CD8-positive, alpha-beta T cell (primary cell): ENCODE measurements at regions of chr13 and their contacts with region 1.

Region 1: DNA sequence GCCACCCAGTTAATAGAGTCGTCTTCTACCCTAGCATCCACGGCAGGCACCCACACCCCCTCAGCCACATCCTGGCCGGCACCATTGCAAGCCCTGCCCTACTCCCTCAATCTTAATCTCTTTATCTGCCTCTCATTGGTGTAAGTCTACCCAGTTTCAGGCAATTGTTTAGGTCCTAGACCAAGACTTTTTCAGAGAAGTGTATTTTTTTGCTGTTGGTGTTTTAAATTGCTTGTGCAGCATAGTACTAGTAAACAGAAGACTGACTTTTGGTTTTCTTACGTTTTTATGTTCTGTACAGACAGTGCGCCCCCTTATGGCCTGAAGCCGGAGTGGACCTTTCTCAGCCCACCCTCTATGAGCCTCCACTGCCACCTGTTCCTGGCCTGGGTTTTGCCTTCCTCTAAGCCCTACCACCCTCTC is 2.3 kb upstream of the LCP1 start:
- DNase-seq: peak; percentile 57 to 89 (median 77)
- ATAC-seq: peak; percentile 57
- H3K4me3 ChIP-seq: peak overlapping the region; percentile 31 to 32
- H3K4me3 Mint-ChIP-seq: peak overlapping the region; percentile 96
- H3K27ac ChIP-seq: peak overlapping the region; percentile 23 to 94
- H3K27ac Mint-ChIP-seq: peak overlapping the region; percentile 95
- H3K4me1 ChIP-seq: peaks cover 30% of the 10 kb centered on the region
- H3K4me1 Mint-ChIP-seq: peaks cover 37% of the 10 kb centered on the region
- H3K27me3 ChIP-seq: no peaks in the 10 kb centered on the region
- H3K27me3 Mint-ChIP-seq: no peaks in the 10 kb centered on the region
- CTCF ChIP-seq: peak; percentile 74

Region 2: DNA sequence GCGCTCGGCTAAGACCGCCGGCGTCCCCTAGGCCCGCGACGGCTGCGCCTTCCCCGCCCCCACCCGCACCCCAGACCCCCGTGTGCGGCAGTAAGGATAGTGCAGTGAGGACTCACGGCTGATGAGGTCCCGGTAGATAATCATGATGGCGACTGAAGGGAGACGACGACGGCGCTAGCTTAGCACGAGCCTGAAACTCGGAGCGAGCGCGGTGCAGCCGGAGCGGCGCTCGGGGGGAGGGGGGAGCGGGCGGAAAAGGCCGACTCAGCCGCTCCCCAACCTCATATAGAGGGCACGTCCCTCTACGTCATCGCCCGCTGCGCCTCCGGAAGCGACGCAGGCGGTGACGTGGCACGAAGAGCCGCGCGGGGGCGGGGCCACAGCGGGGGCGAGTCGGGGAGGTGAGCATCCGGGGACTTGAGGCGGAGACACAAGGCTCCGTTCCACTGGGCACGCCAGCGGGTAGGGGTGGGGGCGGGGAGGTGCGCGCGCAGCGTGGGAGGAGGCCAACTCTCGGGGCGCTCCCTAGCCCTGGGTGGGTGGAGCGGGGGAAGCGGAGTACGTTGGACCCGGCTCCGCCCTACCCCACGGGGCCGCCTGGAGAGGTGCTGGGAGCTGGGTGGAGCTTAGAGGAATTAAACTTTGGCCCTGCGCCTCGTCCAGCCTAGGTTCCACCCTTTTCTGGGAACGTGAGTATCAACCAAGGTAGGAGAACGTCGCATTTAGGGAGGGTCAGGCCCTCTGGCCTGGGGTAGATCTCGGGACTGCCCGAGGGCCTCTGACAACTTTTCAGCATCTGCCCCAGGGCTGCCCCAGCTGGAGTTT is 843.1 kb before region 1 on chr13 and contains the start of gene TPT1:
- CTCF ChIA-PET with region 1: no interaction called
- POLR2A ChIA-PET with region 1: no interaction called
- intact Hi-C with region 1: loop called in 1 of 2 experiments (anchors 2 kb)
- DNase-seq: peak; percentile 99 to 100 (median 100)
- ATAC-seq: peak; percentile 86
- H3K4me3 ChIP-seq: peak within 1 kb of the TSS; percentile 83 to 89
- H3K4me3 Mint-ChIP-seq: peak within 1 kb of the TSS; percentile 99
- H3K27ac ChIP-seq: peak within 1 kb of the TSS; percentile 96 to 99
- H3K27ac Mint-ChIP-seq: peak within 1 kb of the TSS; percentile 99
- H3K4me1 ChIP-seq: peaks cover 42% of the 10 kb centered on the region
- H3K4me1 Mint-ChIP-seq: peaks cover 63% of the 10 kb centered on the region
- H3K27me3 ChIP-seq: no peaks in the 10 kb centered on the region
- H3K27me3 Mint-ChIP-seq: no peaks in the 10 kb centered on the region
- CTCF ChIP-seq: no peak
- total RNA-seq, gene TPT1: 8,260 to 8,503 TPM

Region 3: DNA sequence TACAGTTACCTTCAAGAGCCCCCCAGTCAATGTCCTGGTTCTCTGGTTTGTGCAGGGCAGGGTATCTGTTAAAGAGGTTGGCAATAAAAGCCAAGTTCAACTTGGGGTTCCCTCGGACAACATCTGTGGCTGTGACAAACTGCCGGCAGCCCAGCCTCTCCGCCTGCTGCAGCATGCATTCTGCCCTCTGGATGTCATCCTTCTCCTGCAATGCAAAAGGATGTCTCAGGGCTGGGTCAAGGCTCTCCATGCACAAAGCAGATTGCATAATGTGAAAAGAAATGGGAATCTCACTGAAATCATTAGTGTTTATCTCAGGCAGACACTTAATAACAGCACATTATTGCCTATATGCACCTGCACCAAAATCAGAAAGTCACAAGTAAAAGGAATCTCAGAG is 37.4 kb before region 1 on chr13:
- CTCF ChIA-PET with region 1: interaction called, 4 read pairs
- POLR2A ChIA-PET with region 1: no interaction called
- intact Hi-C with region 1: loop called (anchors 5 kb)
- DNase-seq: no peak
- ATAC-seq: no peak
- H3K4me3 ChIP-seq: no peak overlapping the region
- H3K4me3 Mint-ChIP-seq: no peak overlapping the region
- H3K27ac ChIP-seq: no peak overlapping the region
- H3K27ac Mint-ChIP-seq: no peak overlapping the region
- H3K4me1 ChIP-seq: peaks cover 7% of the 10 kb centered on the region
- H3K4me1 Mint-ChIP-seq: peaks cover 29% of the 10 kb centered on the region
- H3K27me3 ChIP-seq: no peaks in the 10 kb centered on the region
- H3K27me3 Mint-ChIP-seq: no peaks in the 10 kb centered on the region
- CTCF ChIP-seq: no peak

Region 4: DNA sequence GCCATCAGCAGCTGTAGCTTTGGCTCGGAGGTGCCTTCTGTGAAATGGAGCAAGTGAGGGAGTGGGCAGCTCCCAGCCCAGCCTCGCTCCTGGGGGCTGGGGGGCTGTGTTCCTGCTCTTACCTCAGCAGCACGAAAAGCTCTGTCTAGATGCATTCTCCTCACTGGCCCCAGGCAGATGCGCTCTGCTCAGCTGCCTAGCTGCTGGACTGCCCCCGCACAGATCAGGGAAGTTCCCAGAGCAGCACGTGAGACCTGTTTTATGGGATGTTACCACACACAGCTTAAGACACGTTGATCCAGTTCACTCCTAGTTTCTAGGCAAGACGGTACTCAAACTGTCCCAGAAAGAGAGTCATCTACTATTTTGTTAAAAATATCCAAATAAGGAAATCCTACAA is 15.9 kb before region 1 on chr13:
- CTCF ChIA-PET with region 1: interaction called, 49 read pairs
- POLR2A ChIA-PET with region 1: interaction called, 43 read pairs
- intact Hi-C with region 1: loop called (anchors 1 to 2 kb)
- DNase-seq: peak in 4 of 9 experiments; percentile 29 to 86 (median 59)
- ATAC-seq: peak; percentile 15
- H3K4me3 ChIP-seq: peak overlapping the region; percentile 9 to 15
- H3K4me3 Mint-ChIP-seq: peak overlapping the region; percentile 68
- H3K27ac ChIP-seq: peak overlapping the region; percentile 14 to 83
- H3K27ac Mint-ChIP-seq: peak overlapping the region; percentile 89
- H3K4me1 ChIP-seq: peaks cover 93% of the 10 kb centered on the region
- H3K4me1 Mint-ChIP-seq: peaks cover 90% of the 10 kb centered on the region
- H3K27me3 ChIP-seq: no peaks in the 10 kb centered on the region
- H3K27me3 Mint-ChIP-seq: no peaks in the 10 kb centered on the region
- CTCF ChIP-seq: no peak

Region 5: DNA sequence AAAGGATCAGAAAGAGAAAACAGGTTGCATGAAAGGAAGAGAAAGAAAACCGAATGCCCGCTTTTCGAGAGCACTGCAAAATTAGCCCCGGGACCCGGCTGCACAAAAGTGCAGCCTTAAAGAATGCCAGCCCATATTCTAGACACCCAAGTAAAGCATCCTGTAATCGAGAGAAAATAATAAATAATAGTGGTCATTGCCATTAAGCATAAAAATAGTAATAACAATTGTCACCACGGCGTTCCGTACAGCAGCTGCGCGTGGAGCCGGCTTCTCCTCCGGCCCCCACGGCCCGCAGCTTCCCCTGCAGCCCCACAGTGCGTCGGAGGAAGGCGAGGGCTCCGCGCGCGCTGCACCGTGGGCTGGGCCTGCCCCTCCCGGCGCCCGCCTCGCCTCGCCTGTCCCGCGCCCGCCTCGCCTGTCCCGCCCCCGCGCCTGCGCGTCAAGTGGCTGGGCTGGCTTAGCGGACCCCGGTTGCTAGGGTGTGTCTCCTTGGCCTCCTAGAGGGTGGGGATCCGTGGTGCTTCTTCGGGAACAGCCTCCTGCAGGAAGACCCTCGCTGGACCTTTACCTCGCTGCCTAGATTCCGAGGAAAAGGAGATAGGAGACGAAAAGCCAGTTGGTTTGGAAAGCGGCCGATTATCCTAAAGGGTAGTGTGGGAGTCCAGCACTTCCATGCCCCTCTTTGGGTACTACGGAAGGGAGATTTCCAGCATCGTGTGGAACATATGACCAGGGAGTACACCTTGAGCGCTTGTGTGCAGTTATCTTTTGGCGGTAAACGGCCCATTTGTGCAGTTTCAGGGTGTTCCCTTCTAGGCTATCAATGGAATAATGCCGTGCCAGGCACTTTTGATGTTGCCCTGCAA is 27.4 kb after region 1 on chr13 and contains the start of gene LRRC63:
- CTCF ChIA-PET with region 1: interaction called, 6 read pairs
- POLR2A ChIA-PET with region 1: interaction called, 10 read pairs
- intact Hi-C with region 1: loop called (anchors 1 kb)
- DNase-seq: peak; percentile 58 to 91 (median 84)
- ATAC-seq: peak; percentile 92
- H3K4me3 ChIP-seq: peak within 1 kb of the TSS; percentile 69 to 73
- H3K4me3 Mint-ChIP-seq: peak within 1 kb of the TSS; percentile 86
- H3K27ac ChIP-seq: peak within 1 kb of the TSS; percentile 74 to 90
- H3K27ac Mint-ChIP-seq: peak within 1 kb of the TSS; percentile 93
- H3K4me1 ChIP-seq: peaks cover 13% of the 10 kb centered on the region
- H3K4me1 Mint-ChIP-seq: peaks cover 19% of the 10 kb centered on the region
- H3K27me3 ChIP-seq: no peaks in the 10 kb centered on the region
- H3K27me3 Mint-ChIP-seq: no peaks in the 10 kb centered on the region
- CTCF ChIP-seq: no peak
- total RNA-seq, gene LRRC63: 0.22 to 0.31 TPM

Region 6: DNA sequence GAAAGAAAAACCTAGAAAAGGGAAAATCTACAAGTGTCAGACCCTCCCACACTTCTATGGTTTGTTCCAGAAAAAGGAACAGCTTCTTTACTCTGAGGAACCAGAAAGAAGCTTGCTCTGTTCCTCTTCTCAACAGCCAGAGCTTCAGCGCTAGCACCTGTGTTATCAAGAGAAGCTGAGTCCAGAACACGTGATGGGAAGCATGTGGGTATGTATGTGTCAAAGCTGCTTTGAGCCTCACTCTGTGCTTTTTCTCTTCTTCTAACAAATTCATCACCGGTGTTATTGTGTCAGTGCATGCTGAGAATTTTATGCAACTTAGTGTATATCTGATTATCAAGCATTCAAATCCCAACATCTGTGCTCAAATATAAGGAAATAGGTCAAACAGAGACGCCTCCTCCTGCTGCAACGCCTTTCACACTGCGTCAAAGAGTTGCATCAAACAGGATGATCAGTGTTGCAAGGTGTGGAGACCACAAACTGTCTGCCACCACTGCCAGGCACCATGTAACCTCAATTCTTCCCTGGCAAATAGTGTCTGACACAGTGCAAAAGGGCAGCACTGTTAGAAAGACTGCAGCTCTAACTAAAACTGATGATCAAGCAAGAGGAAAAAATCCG is 111.3 kb after region 1 on chr13:
- CTCF ChIA-PET with region 1: interaction called, 16 read pairs
- POLR2A ChIA-PET with region 1: interaction called, 13 read pairs
- intact Hi-C with region 1: loop called (anchors 1 to 5 kb)
- DNase-seq: peak; percentile 46 to 96 (median 70)
- ATAC-seq: peak; percentile 81
- H3K4me3 ChIP-seq: peak overlapping the region; percentile 11 to 16
- H3K4me3 Mint-ChIP-seq: peak overlapping the region; percentile 60
- H3K27ac ChIP-seq: peak overlapping the region; percentile 69 to 79
- H3K27ac Mint-ChIP-seq: peak overlapping the region; percentile 96
- H3K4me1 ChIP-seq: peaks cover 49% of the 10 kb centered on the region
- H3K4me1 Mint-ChIP-seq: peaks cover 65% of the 10 kb centered on the region
- H3K27me3 ChIP-seq: no peaks in the 10 kb centered on the region
- H3K27me3 Mint-ChIP-seq: no peaks in the 10 kb centered on the region
- CTCF ChIP-seq: no peak

Region 7: DNA sequence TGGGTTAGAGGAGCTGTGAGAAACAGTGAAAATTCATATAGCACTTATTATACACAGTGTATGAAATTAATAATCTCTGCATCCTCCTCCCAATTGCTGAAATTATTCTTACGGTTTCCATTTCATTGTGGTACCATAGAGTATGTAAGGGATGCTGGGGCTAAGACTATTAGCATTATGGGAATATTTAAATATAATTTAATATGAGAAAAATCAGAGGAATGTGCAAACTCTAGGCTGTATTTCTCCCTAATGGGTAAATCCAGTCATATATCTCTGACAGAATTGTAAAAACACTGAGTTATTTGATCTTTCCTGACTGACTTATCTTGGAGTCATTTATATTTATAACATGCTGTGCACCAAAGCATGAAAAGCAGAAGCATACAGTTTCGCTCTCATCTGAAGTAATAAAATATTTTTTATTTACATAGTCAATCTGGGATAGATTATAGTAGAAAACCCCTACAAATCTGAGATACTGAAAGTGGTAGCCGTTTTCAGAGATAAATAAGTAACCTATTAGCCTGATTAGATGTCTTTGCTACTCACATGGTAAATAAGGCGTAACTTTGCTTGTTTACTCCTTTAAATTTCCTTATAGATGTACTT is 403.6 kb after region 1 on chr13:
- CTCF ChIA-PET with region 1: no interaction called
- POLR2A ChIA-PET with region 1: no interaction called
- intact Hi-C with region 1: no loop called
- DNase-seq: no peak
- ATAC-seq: no peak
- H3K4me3 ChIP-seq: no peak overlapping the region
- H3K4me3 Mint-ChIP-seq: no peak overlapping the region
- H3K27ac ChIP-seq: no peak overlapping the region
- H3K27ac Mint-ChIP-seq: no peak overlapping the region
- H3K4me1 ChIP-seq: peaks cover 12% of the 10 kb centered on the region
- H3K4me1 Mint-ChIP-seq: peaks cover 62% of the 10 kb centered on the region
- H3K27me3 ChIP-seq: no peaks in the 10 kb centered on the region
- H3K27me3 Mint-ChIP-seq: no peaks in the 10 kb centered on the region
- CTCF ChIP-seq: no peak